Mammary epithelial cell (primary cell): ENCODE measurements at regions of chr4 and their contacts with region 1.

Region 1: DNA sequence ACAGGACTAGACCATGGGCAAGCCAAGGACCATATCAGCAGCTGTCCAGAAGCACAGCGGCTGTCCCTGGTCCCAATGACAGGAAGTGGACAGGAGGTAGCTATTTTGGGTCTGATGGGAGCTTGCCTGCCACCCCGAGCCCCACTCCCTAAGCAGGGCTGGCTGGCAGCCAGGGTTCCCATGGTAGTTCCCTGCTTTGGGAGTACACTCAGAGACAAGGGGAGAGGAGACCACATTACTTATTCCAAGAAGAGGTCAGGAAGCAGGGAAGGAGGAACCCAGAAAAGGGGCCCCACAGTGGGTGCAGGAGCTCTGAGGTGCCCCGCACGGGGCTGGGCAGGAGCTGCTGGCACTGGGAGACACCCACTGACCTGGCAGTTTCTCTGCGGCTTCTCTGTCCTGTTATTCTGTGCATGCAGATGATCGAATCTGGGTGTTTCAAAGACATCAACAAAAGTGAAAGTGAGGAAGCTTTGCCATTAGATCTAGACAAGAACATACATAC is 36.3 kb downstream of the HTT-AS start:
- DNase-seq: no peak
- H3K4me3 ChIP-seq: no peak overlapping the region
- H3K27ac ChIP-seq: no peak overlapping the region
- H3K4me1 ChIP-seq: peaks cover 11% of the 10 kb centered on the region
- H3K27me3 ChIP-seq: no peaks in the 10 kb centered on the region
- CTCF ChIP-seq: no peak

Region 2: DNA sequence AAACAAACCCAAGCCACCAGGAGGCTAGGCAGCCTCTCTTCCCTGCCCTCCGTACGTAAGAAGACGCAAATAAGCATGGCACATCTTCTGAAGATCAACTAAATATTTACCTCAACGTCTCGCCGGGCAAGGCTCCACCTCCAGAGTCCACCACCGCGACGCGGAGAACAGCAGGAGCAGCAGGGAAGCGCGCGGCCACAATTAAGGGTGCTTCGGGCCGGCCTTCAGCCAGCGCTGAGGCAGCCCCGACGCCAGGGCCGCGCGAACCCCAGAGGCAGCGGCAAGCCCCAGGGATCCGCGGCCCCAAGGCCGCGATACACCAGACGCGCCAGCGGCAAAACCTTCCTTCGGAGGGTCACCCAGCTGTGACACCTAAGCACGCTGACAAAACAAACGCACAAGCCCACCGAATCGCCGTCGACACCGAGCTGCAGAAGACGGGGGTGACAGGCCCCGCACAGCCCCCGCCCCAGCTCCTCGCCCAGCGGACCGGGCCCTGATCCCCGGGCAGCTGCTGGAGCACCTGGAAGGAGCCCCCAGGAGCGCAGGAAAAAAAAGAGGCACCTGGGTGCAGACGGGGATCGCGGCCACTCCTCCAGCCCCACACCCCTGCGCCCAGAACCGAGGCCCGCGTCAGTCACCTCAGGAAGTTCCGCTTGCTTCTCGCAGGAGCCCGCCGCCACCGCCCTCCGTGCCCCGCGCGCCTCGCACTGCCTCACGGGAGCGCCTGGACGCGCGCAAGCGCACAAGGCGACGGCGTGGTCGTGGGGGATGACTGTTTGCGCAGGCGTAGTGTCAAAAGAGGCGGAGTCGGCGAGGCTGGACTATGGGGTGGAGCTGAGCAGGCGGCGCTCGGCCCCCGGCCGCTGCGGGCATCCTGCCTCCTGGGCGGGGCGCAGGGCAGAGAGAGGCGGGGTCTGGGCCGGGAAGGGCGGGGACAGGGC is 796.3 kb before region 1 on chr4 and contains the starts of genes HAUS3 and POLN:
- CTCF ChIA-PET with region 1: no interaction called
- dilution Hi-C with region 1: no loop called
- in situ Hi-C with region 1: no loop called
- intact Hi-C with region 1: loop called (anchors 5 kb)
- DNase-seq: peak; percentile 97
- H3K4me3 ChIP-seq: peak within 1 kb of the TSS; percentile 63 to 97 (median 96)
- H3K27ac ChIP-seq: peak within 1 kb of the TSS; percentile 52
- H3K4me1 ChIP-seq: peaks cover 14% of the 10 kb centered on the region
- H3K27me3 ChIP-seq: no peaks in the 10 kb centered on the region
- CTCF ChIP-seq: peak in 1 of 2 donors; percentile 3
- total RNA-seq, gene HAUS3: 9.2 to 12.8 TPM
- total RNA-seq, gene POLN: 0.42 to 0.83 TPM

Region 3: GRCh38 chr4:2761035-2761923 is 276.7 kb before region 1 on chr4:
- CTCF ChIA-PET with region 1: no interaction called
- dilution Hi-C with region 1: no loop called
- in situ Hi-C with region 1: loop called in 1 of 2 experiments (anchors 10 kb)
- intact Hi-C with region 1: loop called (anchors 1 kb)
- DNase-seq: no peak
- H3K4me3 ChIP-seq: no peak overlapping the region
- H3K27ac ChIP-seq: no peak overlapping the region
- H3K4me1 ChIP-seq: peaks cover 15% of the 10 kb centered on the region
- H3K27me3 ChIP-seq: no peaks in the 10 kb centered on the region
- CTCF ChIP-seq: no peak

Region 4: GRCh38 chr4:2948895-2949765 is 88.9 kb before region 1 on chr4:
- CTCF ChIA-PET with region 1: no interaction called
- dilution Hi-C with region 1: no loop called
- in situ Hi-C with region 1: no loop called
- intact Hi-C with region 1: loop called (anchors 1 kb)
- DNase-seq: no peak
- H3K4me3 ChIP-seq: no peak overlapping the region
- H3K27ac ChIP-seq: no peak overlapping the region
- H3K4me1 ChIP-seq: no peaks in the 10 kb centered on the region
- H3K27me3 ChIP-seq: no peaks in the 10 kb centered on the region
- CTCF ChIP-seq: peak; percentile 33 to 67

Region 5: DNA sequence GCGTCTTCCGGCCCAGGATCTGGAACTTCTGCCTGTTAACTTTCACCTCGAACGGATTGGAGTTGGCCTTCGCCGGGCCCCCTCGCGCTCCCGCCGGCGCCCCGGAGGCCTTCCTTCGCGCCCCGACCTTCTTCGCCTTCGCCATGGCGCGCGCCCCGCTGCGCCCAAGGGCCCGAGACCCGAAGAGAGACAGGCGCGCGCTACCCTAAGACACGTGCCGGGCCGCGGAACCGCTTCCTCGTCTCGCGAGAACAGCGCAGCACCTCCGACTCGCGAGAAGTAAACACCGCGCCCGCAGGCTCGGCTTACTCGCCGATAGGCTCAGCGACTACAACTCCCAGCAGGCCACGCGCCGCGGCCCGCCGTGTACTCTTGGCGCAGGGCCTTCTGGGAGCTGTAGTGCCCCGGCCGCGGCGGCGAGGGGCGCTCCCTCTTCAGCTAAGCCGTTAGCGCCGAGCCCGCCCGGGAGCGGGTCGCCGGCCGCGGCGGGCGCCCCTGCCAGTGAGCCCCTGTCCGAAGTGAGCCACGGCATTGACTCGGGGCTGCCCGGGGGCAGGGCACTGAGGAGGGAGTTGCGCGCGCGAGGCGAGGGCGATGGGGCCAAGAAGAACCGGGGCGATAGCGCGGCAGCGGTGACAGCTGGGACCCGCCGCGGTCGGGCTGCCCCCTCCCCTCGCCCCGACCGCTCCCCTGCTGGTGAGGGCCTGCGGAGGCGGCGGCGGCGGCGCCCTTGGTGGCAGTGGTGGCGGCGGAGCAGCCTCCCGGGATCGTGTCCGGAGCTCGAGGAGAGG is 74.6 kb before region 1 on chr4 and contains the starts of genes GRK4 and NOP14:
- CTCF ChIA-PET with region 1: interaction called, 4 read pairs
- dilution Hi-C with region 1: no loop called
- in situ Hi-C with region 1: no loop called
- intact Hi-C with region 1: loop called (anchors 1 kb)
- DNase-seq: peak; percentile 97
- H3K4me3 ChIP-seq: peak within 1 kb of the TSS; percentile 60 to 89 (median 64)
- H3K27ac ChIP-seq: peak within 1 kb of the TSS; percentile 72
- H3K4me1 ChIP-seq: peaks cover 15% of the 10 kb centered on the region
- H3K27me3 ChIP-seq: no peaks in the 10 kb centered on the region
- CTCF ChIP-seq: peak; percentile 5 to 35
- total RNA-seq, gene GRK4: 5.4 to 6.8 TPM
- total RNA-seq, gene NOP14: 22.8 to 40.0 TPM

Region 6: DNA sequence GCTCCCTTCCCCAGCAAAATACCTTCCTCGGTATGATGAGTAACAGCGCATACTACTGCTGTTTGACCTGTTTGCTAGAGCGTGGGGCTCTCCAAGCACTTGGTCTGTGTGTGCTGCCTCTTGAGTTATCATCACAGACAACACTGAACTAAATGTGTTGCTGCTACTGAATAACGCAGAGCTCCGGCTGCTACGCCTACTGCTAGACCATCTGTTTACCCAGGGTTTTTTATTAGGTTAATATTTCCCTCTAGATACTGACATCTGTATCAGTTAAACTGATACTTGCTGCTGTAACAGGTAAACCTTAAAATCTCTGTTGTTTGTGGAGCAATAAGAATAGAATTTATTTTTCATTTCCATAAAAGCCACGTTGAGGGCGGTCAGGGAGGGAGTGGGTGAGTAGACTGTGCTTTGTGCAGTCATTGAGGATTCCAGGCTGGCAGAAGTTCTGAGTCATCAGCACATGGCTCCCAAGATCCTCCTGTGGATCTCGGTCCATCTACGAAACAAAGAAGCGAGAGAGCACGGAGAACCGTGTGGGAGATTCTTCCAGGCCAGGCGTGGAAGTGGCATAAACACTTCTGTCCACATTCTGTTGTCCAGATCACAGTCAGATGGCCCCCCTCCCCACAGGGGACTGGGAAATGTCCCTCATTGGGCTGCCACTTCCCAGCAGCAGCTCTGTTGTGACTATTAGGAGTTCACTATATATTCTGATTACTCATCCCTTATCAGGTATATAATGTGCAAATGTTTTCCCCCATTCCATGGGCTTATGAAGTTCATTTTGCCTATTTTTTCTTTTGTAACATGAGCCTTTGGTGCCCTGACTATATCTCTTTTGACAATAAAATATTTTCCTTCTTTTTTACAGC is 60.6 kb before region 1 on chr4:
- CTCF ChIA-PET with region 1: no interaction called
- dilution Hi-C with region 1: no loop called
- in situ Hi-C with region 1: loop called (anchors 5 to 10 kb)
- intact Hi-C with region 1: loop called (anchors 1 kb)
- DNase-seq: no peak
- H3K4me3 ChIP-seq: no peak overlapping the region
- H3K27ac ChIP-seq: no peak overlapping the region
- H3K4me1 ChIP-seq: no peaks in the 10 kb centered on the region
- H3K27me3 ChIP-seq: no peaks in the 10 kb centered on the region
- CTCF ChIP-seq: no peak

Region 7: DNA sequence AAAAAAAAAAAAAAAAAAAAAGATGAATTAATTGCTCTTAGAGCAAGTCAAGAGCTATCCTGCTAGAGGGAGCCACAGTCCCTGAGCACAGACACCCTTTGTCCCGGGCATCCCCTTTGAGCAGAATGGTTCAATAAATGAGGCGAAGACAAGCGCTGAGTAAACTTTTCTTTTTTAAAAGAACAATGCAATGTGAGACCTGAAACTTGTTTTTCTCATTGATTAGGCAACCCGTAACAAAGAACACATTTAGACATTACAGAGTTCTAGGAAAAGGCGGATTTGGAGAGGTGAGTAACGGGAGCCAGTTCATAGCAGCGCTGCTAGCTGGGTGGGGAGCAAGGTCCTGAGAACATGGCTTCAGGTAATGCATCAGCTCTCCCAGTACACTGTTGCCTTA is 28.6 kb before region 1 on chr4:
- CTCF ChIA-PET with region 1: no interaction called
- dilution Hi-C with region 1: no loop called
- in situ Hi-C with region 1: no loop called
- intact Hi-C with region 1: loop called (anchors 1 kb)
- DNase-seq: peak; percentile 65
- H3K4me3 ChIP-seq: no peak overlapping the region
- H3K27ac ChIP-seq: peak overlapping the region; percentile 44
- H3K4me1 ChIP-seq: peaks cover 14% of the 10 kb centered on the region
- H3K27me3 ChIP-seq: no peaks in the 10 kb centered on the region
- CTCF ChIP-seq: peak; percentile 11 to 52

Region 8: DNA sequence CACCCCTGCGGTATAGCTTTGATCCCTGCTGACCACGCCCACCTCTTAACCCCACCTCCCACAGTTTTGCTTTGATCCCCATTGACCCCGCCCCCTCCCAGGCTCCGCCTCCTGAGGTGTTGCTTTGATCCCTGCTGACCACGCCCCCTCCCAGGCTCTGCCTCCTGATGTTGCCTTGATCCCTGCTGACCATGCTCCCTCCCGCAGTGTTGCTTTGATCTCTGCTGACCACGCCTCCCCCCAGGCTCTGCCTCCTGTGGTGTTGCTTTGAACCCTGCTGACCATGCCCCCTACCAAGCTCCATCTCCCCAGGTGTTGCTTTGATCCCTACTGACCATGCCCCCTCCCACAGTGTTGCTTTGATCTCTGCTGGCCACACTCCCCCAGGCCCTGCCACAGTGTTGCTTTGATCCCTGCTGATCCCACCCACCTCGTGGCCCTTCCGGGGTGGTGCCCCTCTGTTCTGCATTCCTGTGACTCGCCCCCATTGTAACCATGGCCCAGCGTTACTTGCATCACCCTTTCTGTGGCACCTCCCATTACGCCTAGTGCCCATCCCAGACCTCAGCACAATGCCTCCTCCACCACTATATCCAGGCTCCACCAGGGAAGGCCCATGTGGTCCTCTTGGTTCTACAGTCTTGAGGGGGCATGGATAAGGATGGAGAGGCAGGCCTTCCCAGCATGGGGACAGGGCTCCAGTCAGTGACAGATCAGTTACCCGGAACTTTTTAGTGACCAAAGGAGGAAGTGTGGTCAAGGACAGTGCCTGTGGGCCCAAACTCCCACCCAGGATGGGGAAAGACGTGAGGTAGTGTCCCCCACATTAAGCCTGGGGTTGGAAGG is 799.0 kb after region 1 on chr4:
- CTCF ChIA-PET with region 1: no interaction called
- dilution Hi-C with region 1: no loop called
- in situ Hi-C with region 1: no loop called
- intact Hi-C with region 1: no loop called
- DNase-seq: no peak
- H3K4me3 ChIP-seq: no peak overlapping the region
- H3K27ac ChIP-seq: no peak overlapping the region
- H3K4me1 ChIP-seq: no peaks in the 10 kb centered on the region
- H3K27me3 ChIP-seq: no peaks in the 10 kb centered on the region
- CTCF ChIP-seq: no peak